CD4-positive, alpha-beta T cell (primary cell): ENCODE measurements at regions of chr4 and their contacts with region 1.

Region 1: DNA sequence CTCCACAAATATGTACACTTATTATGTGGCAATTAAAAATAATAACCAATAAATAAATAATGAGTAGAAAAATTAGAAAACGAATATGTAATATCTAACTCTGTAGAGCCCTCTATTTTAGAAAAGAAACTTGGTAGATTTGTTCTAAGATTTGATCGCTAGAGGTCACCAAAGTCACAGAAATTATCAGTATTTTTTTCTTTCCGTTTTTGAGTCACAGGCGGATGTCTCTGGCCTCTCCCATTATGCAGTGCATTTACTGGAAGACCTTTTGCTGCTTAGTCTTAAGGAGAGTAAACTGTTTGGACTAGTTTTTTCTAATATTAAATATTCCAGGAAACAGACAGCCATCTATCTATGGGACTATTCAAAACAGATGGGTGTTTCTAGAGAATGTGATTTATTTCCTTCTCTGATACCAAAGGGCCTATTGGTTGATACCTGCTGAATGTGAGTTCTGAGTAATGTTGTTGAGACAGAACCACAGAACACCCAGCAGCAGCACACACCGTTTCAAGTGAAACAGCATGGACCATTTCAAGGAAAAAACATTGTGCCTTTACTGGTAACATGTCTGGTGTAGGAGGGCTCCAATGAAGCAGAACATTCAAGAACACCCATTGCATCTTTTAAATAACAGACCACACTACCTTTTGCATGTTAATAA is 34.0 kb upstream of the GYPA start:
- DNase-seq: peak in 4 of 14 experiments; percentile 6 to 65 (median 63)
- ATAC-seq: peak; percentile 37
- H3K4me3 ChIP-seq: no peak overlapping the region
- H3K4me3 Mint-ChIP-seq: no peak overlapping the region
- H3K27ac ChIP-seq: no peak overlapping the region
- H3K27ac Mint-ChIP-seq: no peak overlapping the region
- H3K4me1 ChIP-seq: no peaks in the 10 kb centered on the region
- H3K4me1 Mint-ChIP-seq: no peaks in the 10 kb centered on the region
- H3K27me3 ChIP-seq: peaks cover 0 to 3% of the 10 kb centered on the region in 2 experiments
- H3K27me3 Mint-ChIP-seq: peaks cover 6% of the 10 kb centered on the region
- CTCF ChIP-seq: peak; percentile 70

Region 2: GRCh38 chr4:144141493-144141892 is 33.0 kb before region 1 on chr4:
- CTCF ChIA-PET with region 1: no interaction called
- POLR2A ChIA-PET with region 1: no interaction called
- intact Hi-C with region 1: no loop called
- DNase-seq: no peak
- ATAC-seq: no peak
- H3K4me3 ChIP-seq: no peak overlapping the region
- H3K4me3 Mint-ChIP-seq: no peak overlapping the region
- H3K27ac ChIP-seq: no peak overlapping the region
- H3K27ac Mint-ChIP-seq: no peak overlapping the region
- H3K4me1 ChIP-seq: no peaks in the 10 kb centered on the region
- H3K4me1 Mint-ChIP-seq: no peaks in the 10 kb centered on the region
- H3K27me3 ChIP-seq: no peaks in the 10 kb centered on the region
- H3K27me3 Mint-ChIP-seq: no peaks in the 10 kb centered on the region
- CTCF ChIP-seq: no peak

Region 3: DNA sequence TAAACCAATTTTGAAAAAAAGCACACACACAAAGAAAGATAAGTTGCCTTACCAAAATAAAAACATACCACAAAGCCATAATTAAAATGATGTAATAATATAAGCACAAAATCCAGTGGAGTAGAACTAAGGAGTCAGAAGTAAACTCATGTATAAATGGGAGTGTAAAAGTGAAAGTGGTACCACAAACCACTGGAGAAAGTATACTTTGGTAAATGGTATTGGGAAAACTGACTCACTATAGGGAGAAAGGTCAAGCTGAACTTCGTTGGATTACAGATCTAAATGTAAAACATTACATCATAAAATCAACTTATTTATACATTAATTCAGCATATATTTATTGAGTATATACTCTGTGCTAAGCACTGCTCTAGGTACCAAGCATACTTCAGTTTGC is 425.1 kb after region 1 on chr4:
- CTCF ChIA-PET with region 1: no interaction called
- POLR2A ChIA-PET with region 1: no interaction called
- intact Hi-C with region 1: no loop called
- DNase-seq: no peak
- ATAC-seq: no peak
- H3K4me3 ChIP-seq: no peak overlapping the region
- H3K4me3 Mint-ChIP-seq: no peak overlapping the region
- H3K27ac ChIP-seq: no peak overlapping the region
- H3K27ac Mint-ChIP-seq: no peak overlapping the region
- H3K4me1 ChIP-seq: no peaks in the 10 kb centered on the region
- H3K4me1 Mint-ChIP-seq: no peaks in the 10 kb centered on the region
- H3K27me3 ChIP-seq: no peaks in the 10 kb centered on the region
- H3K27me3 Mint-ChIP-seq: peaks cover 5% of the 10 kb centered on the region
- CTCF ChIP-seq: no peak

Region 4: GRCh38 chr4:145061318-145061920 is 886.9 kb after region 1 on chr4:
- CTCF ChIA-PET with region 1: no interaction called
- POLR2A ChIA-PET with region 1: no interaction called
- intact Hi-C with region 1: loop called (anchors 1 to 2 kb)
- DNase-seq: peak in 3 of 14 experiments; percentile 60 to 67 (median 62)
- ATAC-seq: peak; percentile 58
- H3K4me3 ChIP-seq: no peak overlapping the region
- H3K4me3 Mint-ChIP-seq: no peak overlapping the region
- H3K27ac ChIP-seq: no peak overlapping the region
- H3K27ac Mint-ChIP-seq: no peak overlapping the region
- H3K4me1 ChIP-seq: no peaks in the 10 kb centered on the region
- H3K4me1 Mint-ChIP-seq: peaks cover 25% of the 10 kb centered on the region
- H3K27me3 ChIP-seq: no peaks in the 10 kb centered on the region
- H3K27me3 Mint-ChIP-seq: no peaks in the 10 kb centered on the region
- CTCF ChIP-seq: peak; percentile 79

Region 5: DNA sequence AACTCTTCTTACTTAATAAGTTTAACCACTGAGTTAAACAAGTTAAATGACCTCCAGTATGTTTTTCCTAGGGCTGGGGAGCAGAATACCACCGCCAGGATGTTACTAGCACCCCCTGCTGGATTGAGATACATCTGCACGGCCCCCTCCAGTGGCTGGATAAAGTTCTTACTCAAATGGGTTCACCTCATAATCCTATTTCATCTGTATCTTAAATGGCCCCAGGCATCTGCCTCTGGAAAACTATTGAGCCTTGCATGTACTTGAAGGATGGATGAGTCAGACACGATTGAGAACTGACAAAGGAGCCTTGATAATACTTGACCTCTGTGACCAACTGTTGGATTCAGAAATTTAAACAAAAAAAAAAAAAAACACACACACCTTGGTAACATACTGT is 1383.2 kb after region 1 on chr4:
- CTCF ChIA-PET with region 1: no interaction called
- POLR2A ChIA-PET with region 1: no interaction called
- intact Hi-C with region 1: loop called in 1 of 2 experiments (anchors 5 kb)
- DNase-seq: peak in 11 of 14 experiments; percentile 11 to 65 (median 28)
- ATAC-seq: peak; percentile 97
- H3K4me3 ChIP-seq: no peak overlapping the region
- H3K4me3 Mint-ChIP-seq: no peak overlapping the region
- H3K27ac ChIP-seq: no peak overlapping the region
- H3K27ac Mint-ChIP-seq: no peak overlapping the region
- H3K4me1 ChIP-seq: no peaks in the 10 kb centered on the region
- H3K4me1 Mint-ChIP-seq: no peaks in the 10 kb centered on the region
- H3K27me3 ChIP-seq: no peaks in the 10 kb centered on the region
- H3K27me3 Mint-ChIP-seq: no peaks in the 10 kb centered on the region
- CTCF ChIP-seq: peak; percentile 91

Region 6: DNA sequence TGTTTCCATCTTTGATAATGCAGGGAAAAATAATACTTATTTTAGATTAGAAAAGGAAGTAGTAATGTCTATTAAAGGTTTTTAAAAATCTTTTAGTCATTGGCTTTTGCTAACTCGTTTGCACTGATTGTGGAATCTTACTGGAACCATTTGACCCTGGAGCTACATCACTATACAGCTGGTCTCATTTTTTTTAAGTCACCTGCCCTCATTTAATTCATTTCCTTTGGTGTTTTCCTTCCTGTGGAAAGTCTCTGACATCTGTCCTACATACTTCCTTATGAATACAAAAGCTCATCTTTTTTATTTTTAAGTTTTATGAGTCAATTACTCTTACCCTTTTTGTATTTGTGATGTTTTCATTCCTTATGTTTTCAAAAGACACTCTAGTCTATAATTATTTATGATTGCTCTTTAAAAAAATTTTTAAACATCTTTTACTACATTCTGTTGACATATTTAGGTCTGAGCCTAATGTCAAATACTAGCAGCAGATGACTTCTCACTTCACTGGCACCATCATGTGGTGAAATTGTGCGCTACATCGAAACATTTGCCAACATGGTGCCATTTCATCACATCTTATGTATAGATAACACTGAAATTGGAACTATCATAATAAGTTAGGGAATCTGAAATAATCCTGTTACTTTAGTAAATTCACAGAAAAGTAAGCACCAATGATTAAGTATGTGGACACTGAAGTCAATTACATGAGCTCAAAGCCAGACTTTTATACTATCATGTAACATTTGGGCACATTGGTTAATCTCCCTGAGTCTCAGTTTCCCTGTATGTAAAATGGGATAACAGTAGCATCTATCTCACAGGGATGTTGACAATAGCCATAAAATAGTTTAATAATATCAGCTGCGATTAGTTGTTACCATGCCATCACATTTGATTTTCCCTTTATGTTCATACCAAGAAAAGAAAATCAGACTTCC is 1435.2 kb after region 1 on chr4:
- CTCF ChIA-PET with region 1: no interaction called
- POLR2A ChIA-PET with region 1: no interaction called
- intact Hi-C with region 1: loop called in 1 of 2 experiments (anchors 5 kb)
- DNase-seq: peak; percentile 32 to 76 (median 51)
- ATAC-seq: peak; percentile 85
- H3K4me3 ChIP-seq: no peak overlapping the region
- H3K4me3 Mint-ChIP-seq: no peak overlapping the region
- H3K27ac ChIP-seq: no peak overlapping the region
- H3K27ac Mint-ChIP-seq: no peak overlapping the region
- H3K4me1 ChIP-seq: no peaks in the 10 kb centered on the region
- H3K4me1 Mint-ChIP-seq: peaks cover 6% of the 10 kb centered on the region
- H3K27me3 ChIP-seq: no peaks in the 10 kb centered on the region
- H3K27me3 Mint-ChIP-seq: peaks cover 9% of the 10 kb centered on the region
- CTCF ChIP-seq: peak; percentile 75